K562 (cell line): ENCODE measurements at regions of chr15 and their contacts with region 1.

Region 1: DNA sequence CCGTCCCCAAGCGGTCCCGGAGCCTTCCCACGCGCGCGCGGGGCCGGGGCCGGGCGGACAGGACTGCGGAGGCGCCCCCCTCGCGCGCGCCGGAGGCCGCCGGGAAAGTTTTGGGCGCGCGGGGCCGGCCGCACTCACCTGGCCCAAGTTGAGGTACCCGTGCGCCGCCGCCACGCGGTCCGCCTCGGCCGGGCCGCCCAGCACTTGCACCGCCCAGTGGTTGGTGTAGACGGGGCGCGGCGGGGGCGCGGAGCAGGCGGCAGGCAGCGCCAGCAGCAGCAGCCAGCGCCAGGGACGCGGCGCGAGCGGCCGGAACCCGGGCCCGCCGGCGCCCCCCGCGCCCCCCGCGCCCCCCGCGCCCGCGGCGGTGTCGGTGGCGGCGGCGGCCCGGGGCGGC is 273 bp downstream of the PCSK6 start:
- DNase-seq: peak; percentile 66 to 75 (median 72)
- ATAC-seq: peak; percentile 72
- H3K4me3 ChIP-seq: peak overlapping the region; percentile 47
- H3K27ac ChIP-seq: peak overlapping the region; percentile 51; the same call in 1 of the 3 replicates
- H3K4me1 ChIP-seq: peaks cover 0 to 18% of the 10 kb centered on the region in 2 experiments; a peak in 3 of 5 replicates
- H3K27me3 ChIP-seq: no peaks in the 10 kb centered on the region; a peak in 1 of 5 replicates
- CTCF ChIP-seq: peak in 1 of 3 experiments; percentile 23; a peak in 1 of 6 replicates
- EP300 ChIP-seq: no peak
- POLR2A ChIP-seq: no peak
- RAD21 ChIP-seq: 0 out of 4 replicates have a peak, but pooled peaks of 1 of the 2 experiments have one; percentile 7

Region 2: GRCh38 chr15:101445562-101446517 is 43.4 kb before region 1 on chr15:
- CTCF ChIA-PET with region 1: no interaction called
- POLR2A ChIA-PET with region 1: interaction called, 3 read pairs
- in situ Hi-C with region 1: no loop called
- intact Hi-C with region 1: loop called (anchors 5 kb)
- DNase-seq: peak in 3 of 4 experiments; percentile 26 to 70 (median 27)
- ATAC-seq: peak; percentile 81
- H3K4me3 ChIP-seq: no peak overlapping the region
- H3K27ac ChIP-seq: peak overlapping the region; percentile 78; the same call in 2 of the 3 replicates
- H3K4me1 ChIP-seq: peaks cover 31 to 34% of the 10 kb centered on the region in 2 experiments
- H3K27me3 ChIP-seq: no peaks in the 10 kb centered on the region
- CTCF ChIP-seq: no peak
- EP300 ChIP-seq: peak; percentile 93
- POLR2A ChIP-seq: no peak
- RAD21 ChIP-seq: peak in 1 of 2 experiments; percentile 10; a peak in 1 of 4 replicates

Region 3: GRCh38 chr15:101600035-101600434 is 110.8 kb after region 1 on chr15:
- CTCF ChIA-PET with region 1: no interaction called
- POLR2A ChIA-PET with region 1: no interaction called
- in situ Hi-C with region 1: no loop called
- intact Hi-C with region 1: no loop called
- DNase-seq: no peak
- ATAC-seq: peak; percentile 66
- H3K4me3 ChIP-seq: no peak overlapping the region
- H3K27ac ChIP-seq: no peak overlapping the region
- H3K4me1 ChIP-seq: no peaks in the 10 kb centered on the region
- H3K27me3 ChIP-seq: peaks cover 7 to 11% of the 10 kb centered on the region in 2 experiments
- CTCF ChIP-seq: no peak
- EP300 ChIP-seq: no peak
- POLR2A ChIP-seq: no peak
- RAD21 ChIP-seq: no peak